ENCODE measurements at regions of chr9 and their contacts with region 1.

Region 1: GRCh38 chr9:36258208-36258988 is at the start of gene GNE:
- DNase-seq: peak; percentile 91
- H3K4me3 ChIP-seq: peak within 1 kb of the TSS; percentile 34 to 96 (median 65)
- H3K27ac ChIP-seq: peak within 1 kb of the TSS; percentile 41
- H3K4me1 ChIP-seq: peaks cover 4% of the 10 kb centered on the region
- H3K27me3 ChIP-seq: no peaks in the 10 kb centered on the region
- CTCF ChIP-seq: no peak
- total RNA-seq, gene GNE: 8.7 to 16.5 TPM

Region 2: DNA sequence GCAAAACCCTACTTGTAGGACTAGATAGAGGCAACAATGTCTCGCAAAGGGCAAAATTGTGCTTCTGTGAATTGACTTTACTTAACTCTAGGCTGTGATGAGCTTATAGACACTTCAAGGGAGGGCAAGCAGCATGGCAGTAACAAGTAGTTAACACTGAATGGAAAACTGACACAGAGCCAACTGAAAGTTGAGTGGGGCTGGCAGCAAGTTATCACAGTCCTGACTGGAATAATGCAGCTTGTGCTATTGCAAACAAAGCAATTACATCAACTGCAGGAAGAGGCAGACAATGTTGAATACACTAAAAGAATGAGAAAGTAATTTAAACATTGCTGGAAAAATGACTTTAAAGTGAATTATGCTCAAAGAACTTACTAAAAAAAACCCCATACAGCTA is 79.5 kb after region 1 on chr9:
- CTCF ChIA-PET with region 1: no interaction called
- dilution Hi-C with region 1: no loop called
- in situ Hi-C with region 1: loop called in 1 of 2 experiments (anchors 5 kb)
- intact Hi-C with region 1: loop called (anchors 2 kb)
- DNase-seq: peak; percentile 40
- H3K4me3 ChIP-seq: no peak overlapping the region
- H3K27ac ChIP-seq: peak overlapping the region; percentile 2
- H3K4me1 ChIP-seq: peaks cover 22% of the 10 kb centered on the region
- H3K27me3 ChIP-seq: no peaks in the 10 kb centered on the region
- CTCF ChIP-seq: no peak

Measured in mammary epithelial cell (primary cell).